ENCODE measurements at regions of chr17 and their contacts with region 1.

Region 1: GRCh38 chr17:65055348-65056261 is 935 bp downstream of the GNA13 start:
- DNase-seq: peak; percentile 55
- ATAC-seq: peak; percentile 21
- H3K4me3 Mint-ChIP-seq: peak overlapping the region; percentile 96
- H3K27ac Mint-ChIP-seq: peak overlapping the region; percentile 90
- H3K4me1 Mint-ChIP-seq: peaks cover 55% of the 10 kb centered on the region
- H3K27me3 Mint-ChIP-seq: no peaks in the 10 kb centered on the region
- CTCF ChIP-seq: no peak

Region 2: DNA sequence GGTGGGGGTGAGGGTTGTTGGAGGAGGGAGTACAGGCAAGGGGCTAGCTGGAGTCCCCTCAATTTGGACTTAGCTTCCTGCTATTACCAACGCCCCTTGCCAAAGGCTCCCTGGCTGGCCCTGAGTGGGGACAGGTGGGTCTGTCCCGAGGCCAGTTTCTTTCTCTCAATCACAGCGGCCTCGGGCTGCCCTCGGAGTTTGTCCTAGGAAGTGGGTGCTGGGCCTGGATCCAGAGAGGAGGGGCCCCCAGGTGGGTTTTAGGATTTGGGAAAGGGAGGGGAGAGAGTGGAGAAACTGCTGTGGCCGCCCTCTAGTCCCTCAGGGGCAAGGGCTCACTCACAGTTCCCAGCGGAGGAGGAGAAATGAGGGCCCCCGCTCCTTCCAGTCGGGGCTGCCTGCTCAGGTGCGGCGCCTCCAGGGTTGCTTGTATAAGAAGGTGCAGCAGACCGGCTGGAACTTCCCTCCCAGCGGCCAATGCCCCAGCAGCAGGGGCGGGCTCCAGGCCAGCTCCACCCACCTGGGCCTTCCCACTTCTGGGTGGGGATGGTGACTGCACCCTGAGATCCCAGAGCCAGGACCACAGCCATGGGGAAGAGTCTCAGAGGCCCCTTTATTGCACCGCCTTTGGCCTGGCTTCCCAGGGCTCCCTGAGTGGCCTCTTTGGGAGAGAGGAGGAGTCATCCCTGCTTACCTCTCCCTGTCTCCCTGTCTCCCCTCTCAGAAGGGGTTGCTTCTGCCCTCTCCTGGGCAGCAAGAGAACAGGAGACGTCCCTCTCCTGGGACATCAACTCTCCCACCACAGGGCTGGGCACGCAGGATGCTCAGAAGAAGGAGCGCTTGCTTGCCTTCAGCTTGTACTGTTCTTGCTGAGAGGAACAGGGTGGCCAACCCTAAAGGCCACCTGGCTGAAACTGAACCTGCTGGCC is 281.5 kb before region 1 on chr17:
- CTCF ChIA-PET with region 1: no interaction called
- POLR2A ChIA-PET with region 1: interaction called, 6 read pairs
- intact Hi-C with region 1: loop called (anchors 10 kb)
- DNase-seq: no peak
- ATAC-seq: no peak
- H3K4me3 Mint-ChIP-seq: no peak overlapping the region
- H3K27ac Mint-ChIP-seq: no peak overlapping the region
- H3K4me1 Mint-ChIP-seq: peaks cover 23% of the 10 kb centered on the region
- H3K27me3 Mint-ChIP-seq: peaks cover 5% of the 10 kb centered on the region
- CTCF ChIP-seq: no peak

Region 3: GRCh38 chr17:64968652-64969501 is 86.7 kb before region 1 on chr17:
- CTCF ChIA-PET with region 1: interaction called, 3 read pairs
- POLR2A ChIA-PET with region 1: interaction called, 46 read pairs
- intact Hi-C with region 1: loop called (anchors 2 kb)
- DNase-seq: no peak
- ATAC-seq: no peak
- H3K4me3 Mint-ChIP-seq: peak overlapping the region; percentile 38
- H3K27ac Mint-ChIP-seq: peak overlapping the region; percentile 76
- H3K4me1 Mint-ChIP-seq: peaks cover 85% of the 10 kb centered on the region
- H3K27me3 Mint-ChIP-seq: no peaks in the 10 kb centered on the region
- CTCF ChIP-seq: no peak

Region 4: GRCh38 chr17:64984851-64985521 is 70.6 kb before region 1 on chr17:
- CTCF ChIA-PET with region 1: interaction called, 4 read pairs
- POLR2A ChIA-PET with region 1: interaction called, 36 read pairs
- intact Hi-C with region 1: loop called (anchors 1 kb)
- DNase-seq: no peak
- ATAC-seq: no peak
- H3K4me3 Mint-ChIP-seq: peak overlapping the region; percentile 81
- H3K27ac Mint-ChIP-seq: peak overlapping the region; percentile 99
- H3K4me1 Mint-ChIP-seq: peaks cover 64% of the 10 kb centered on the region
- H3K27me3 Mint-ChIP-seq: no peaks in the 10 kb centered on the region
- CTCF ChIP-seq: no peak

Region 5: DNA sequence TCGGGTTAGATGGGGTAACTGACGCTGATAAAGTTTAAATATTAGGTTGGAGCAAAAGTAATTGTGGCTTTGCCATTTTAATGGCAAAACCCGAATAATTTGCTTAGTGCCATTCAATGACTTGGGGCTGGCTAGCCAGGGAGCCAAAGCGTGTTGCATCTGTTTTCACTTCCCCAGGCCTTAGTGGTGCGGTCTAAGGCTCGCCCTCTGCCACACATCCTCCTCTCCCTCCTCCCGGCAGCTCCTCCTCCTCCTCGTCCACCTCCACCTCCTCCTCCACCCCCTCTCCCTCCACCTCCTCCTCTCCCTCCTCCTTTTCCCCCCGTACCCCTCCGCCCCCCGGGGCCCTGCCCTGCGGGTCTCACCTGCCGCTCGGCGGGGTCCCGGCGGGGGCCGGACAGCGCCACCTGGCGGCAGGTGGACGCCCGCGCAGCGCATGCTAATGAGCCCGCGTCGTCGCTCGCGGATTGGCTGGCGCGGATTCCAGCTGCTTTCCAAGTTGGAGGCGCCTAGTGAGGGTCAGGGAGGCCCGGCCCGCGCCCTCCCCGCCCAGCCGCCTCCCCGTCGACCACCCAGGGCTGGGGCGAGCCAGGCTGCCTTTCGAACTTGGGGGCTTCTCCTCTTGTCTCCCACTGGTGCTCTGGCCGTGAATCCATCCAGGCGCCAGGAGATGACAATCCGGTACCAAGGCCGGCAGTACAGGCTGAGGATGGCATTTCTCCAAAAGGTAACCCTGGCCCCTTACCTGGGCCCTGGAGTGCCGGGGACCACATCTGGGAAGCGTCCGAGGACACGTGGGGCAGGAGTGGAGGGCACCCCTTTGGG is 44.9 kb after region 1 on chr17:
- CTCF ChIA-PET with region 1: interaction called, 20 read pairs
- POLR2A ChIA-PET with region 1: interaction called, 62 read pairs
- intact Hi-C with region 1: loop called (anchors 1 kb)
- DNase-seq: peak; percentile 82
- ATAC-seq: peak; percentile 84
- H3K4me3 Mint-ChIP-seq: peak overlapping the region; percentile 85
- H3K27ac Mint-ChIP-seq: peak overlapping the region; percentile 98
- H3K4me1 Mint-ChIP-seq: peaks cover 23% of the 10 kb centered on the region
- H3K27me3 Mint-ChIP-seq: peaks cover 5% of the 10 kb centered on the region
- CTCF ChIP-seq: no peak

Region 6: GRCh38 chr17:65137021-65137991 is 81.7 kb after region 1 on chr17 and contains the start of gene RGS9:
- CTCF ChIA-PET with region 1: no interaction called
- POLR2A ChIA-PET with region 1: interaction called, 3 read pairs
- intact Hi-C with region 1: loop called (anchors 2 kb)
- DNase-seq: peak; percentile 84
- ATAC-seq: peak; percentile 91
- H3K4me3 Mint-ChIP-seq: peak within 1 kb of the TSS; percentile 81
- H3K27ac Mint-ChIP-seq: peak within 1 kb of the TSS; percentile 65
- H3K4me1 Mint-ChIP-seq: peaks cover 20% of the 10 kb centered on the region
- H3K27me3 Mint-ChIP-seq: peaks cover 9% of the 10 kb centered on the region
- CTCF ChIP-seq: no peak
- total RNA-seq, gene RGS9: 3.2 TPM in 2 replicates

Region 7: DNA sequence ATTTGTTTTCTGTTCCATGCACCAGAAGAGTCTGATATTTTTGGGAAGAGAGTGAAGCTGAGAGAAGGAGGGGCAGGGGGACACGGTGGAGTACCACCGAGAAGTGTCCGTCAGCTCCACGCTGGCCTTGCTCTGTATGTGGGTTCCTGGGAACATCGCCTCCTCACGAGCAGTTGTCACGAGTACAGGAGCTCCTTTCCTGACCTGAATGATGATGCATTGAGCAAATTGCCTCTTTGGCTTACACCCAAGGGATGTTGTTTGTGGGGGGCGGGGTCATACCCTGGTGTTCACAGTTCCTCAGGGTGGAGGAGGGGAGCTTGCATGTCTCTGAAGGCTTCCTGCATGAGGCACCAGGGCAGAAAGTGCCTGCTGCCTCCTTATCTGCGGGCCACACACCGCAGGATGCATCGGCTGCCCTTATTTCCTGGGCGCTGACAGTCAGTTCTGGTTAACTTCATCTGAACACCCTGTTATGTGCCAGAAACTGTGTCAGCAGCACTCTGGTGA is 117.7 kb after region 1 on chr17:
- CTCF ChIA-PET with region 1: no interaction called
- POLR2A ChIA-PET with region 1: no interaction called
- intact Hi-C with region 1: no loop called
- DNase-seq: no peak
- ATAC-seq: peak; percentile 65
- H3K4me3 Mint-ChIP-seq: no peak overlapping the region
- H3K27ac Mint-ChIP-seq: no peak overlapping the region
- H3K4me1 Mint-ChIP-seq: peaks cover 10% of the 10 kb centered on the region
- H3K27me3 Mint-ChIP-seq: peaks cover 3% of the 10 kb centered on the region
- CTCF ChIP-seq: no peak